Dendritic cell treated with granulocyte-macrophage colony-stimulating factor and Interleukin-4, amounts not matched to agents 40 ng/mL and 50 ng/mL, for 4 days (primary cell): ENCODE measurements at regions of chr18 and their contacts with region 1.

Region 1: DNA sequence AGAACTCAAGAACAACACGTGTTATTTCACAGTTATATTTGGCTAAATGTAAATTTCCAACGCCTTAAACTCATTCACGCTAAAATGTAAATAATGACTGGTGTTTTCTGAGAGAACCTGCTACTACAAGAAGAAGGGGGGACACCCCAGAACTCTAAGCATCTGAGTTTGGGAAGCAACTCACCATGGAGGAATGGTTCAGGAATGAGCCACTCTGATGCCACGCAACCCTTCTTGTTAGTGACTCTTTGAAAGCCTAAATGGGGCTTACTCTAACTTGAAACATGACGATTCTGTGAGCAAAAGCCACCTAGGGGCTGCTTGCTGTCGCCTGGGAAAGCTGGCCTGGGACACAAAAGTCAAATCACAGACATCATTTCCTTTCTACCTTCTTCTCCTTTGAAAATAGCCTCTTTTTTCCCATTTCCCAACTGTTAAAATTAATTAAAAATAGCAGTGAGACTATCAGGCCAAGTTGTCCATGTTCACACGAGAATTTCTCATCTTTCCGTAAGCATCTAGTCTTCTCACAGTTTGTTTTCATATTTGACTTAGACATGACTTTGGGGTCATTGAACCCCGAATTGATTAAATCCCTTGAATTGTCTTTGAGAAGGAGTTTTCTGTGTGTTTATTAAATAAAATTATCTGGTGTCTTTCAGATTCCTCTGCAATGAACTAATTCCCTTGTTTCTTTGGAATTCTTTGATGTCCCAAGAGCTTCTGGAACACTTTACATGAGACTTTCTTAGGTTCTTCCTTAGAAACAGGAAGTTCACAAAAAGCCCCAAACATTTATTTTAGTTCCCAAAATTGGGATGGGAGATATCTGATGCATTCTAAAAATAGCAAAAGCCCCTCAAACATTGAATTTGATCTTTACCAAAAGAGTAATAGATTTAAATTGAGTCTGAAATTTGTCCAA is 75.5 kb upstream of the CABLES1 start:
- H3K4me3 Mint-ChIP-seq: no peak overlapping the region
- H3K27ac Mint-ChIP-seq: peak overlapping the region; percentile 39
- H3K4me1 Mint-ChIP-seq: peaks cover 23% of the 10 kb centered on the region
- H3K27me3 Mint-ChIP-seq: peaks cover 8% of the 10 kb centered on the region

Region 2: GRCh38 chr18:23012249-23012648 is 47.6 kb before region 1 on chr18:
- intact Hi-C with region 1: no loop called
- H3K4me3 Mint-ChIP-seq: no peak overlapping the region
- H3K27ac Mint-ChIP-seq: no peak overlapping the region
- H3K4me1 Mint-ChIP-seq: no peaks in the 10 kb centered on the region
- H3K27me3 Mint-ChIP-seq: no peaks in the 10 kb centered on the region

Region 3: GRCh38 chr18:23094411-23095190 is 34.8 kb after region 1 on chr18:
- intact Hi-C with region 1: loop called (anchors 5 kb)
- H3K4me3 Mint-ChIP-seq: no peak overlapping the region
- H3K27ac Mint-ChIP-seq: peak overlapping the region; percentile 47
- H3K4me1 Mint-ChIP-seq: peaks cover 30% of the 10 kb centered on the region
- H3K27me3 Mint-ChIP-seq: peaks cover 20% of the 10 kb centered on the region